ENCODE measurements at regions of chr11 and their contacts with region 1.

Region 1: GRCh38 chr11:10808553-10809372 is at the start of gene EIF4G2:
- DNase-seq: peak; percentile 98
- H3K4me3 Mint-ChIP-seq: peak within 1 kb of the TSS; percentile 95
- H3K27ac Mint-ChIP-seq: peak within 1 kb of the TSS; percentile 100
- H3K4me1 Mint-ChIP-seq: peaks cover 46% of the 10 kb centered on the region
- H3K27me3 Mint-ChIP-seq: peaks cover 3% of the 10 kb centered on the region
- total RNA-seq, gene EIF4G2: 650 to 817 TPM

Region 2: GRCh38 chr11:10792398-10792975 is 16.3 kb before region 1 on chr11:
- CTCF ChIA-PET with region 1: interaction called, 41 read pairs
- POLR2A ChIA-PET with region 1: interaction called, 13 read pairs
- DNase-seq: peak; percentile 86
- H3K4me3 Mint-ChIP-seq: no peak overlapping the region
- H3K27ac Mint-ChIP-seq: no peak overlapping the region
- H3K4me1 Mint-ChIP-seq: peaks cover 20% of the 10 kb centered on the region
- H3K27me3 Mint-ChIP-seq: peaks cover 6% of the 10 kb centered on the region

Region 3: GRCh38 chr11:10857709-10858438 is 49.1 kb after region 1 on chr11 and contains the start of gene ZBED5:
- CTCF ChIA-PET with region 1: interaction called, 5 read pairs
- POLR2A ChIA-PET with region 1: interaction called, 22 read pairs
- DNase-seq: peak; percentile 96
- H3K4me3 Mint-ChIP-seq: peak within 1 kb of the TSS; percentile 100
- H3K27ac Mint-ChIP-seq: peak within 1 kb of the TSS; percentile 100
- H3K4me1 Mint-ChIP-seq: peaks cover 51% of the 10 kb centered on the region
- H3K27me3 Mint-ChIP-seq: no peaks in the 10 kb centered on the region
- total RNA-seq, gene ZBED5: 57.1 to 57.5 TPM

Region 4: GRCh38 chr11:10908215-10908951 is 99.6 kb after region 1 on chr11:
- CTCF ChIA-PET with region 1: no interaction called
- POLR2A ChIA-PET with region 1: no interaction called
- DNase-seq: no peak
- H3K4me3 Mint-ChIP-seq: no peak overlapping the region
- H3K27ac Mint-ChIP-seq: no peak overlapping the region
- H3K4me1 Mint-ChIP-seq: no peaks in the 10 kb centered on the region
- H3K27me3 Mint-ChIP-seq: peaks cover 7% of the 10 kb centered on the region

Measured in activated CD4-positive, alpha-beta T cell treated with anti-CD3 and anti-CD28 coated beads, Interleukin-2, amount 10 ng/mL, durations not matched to agents 7 days and 5 days (primary cell).